Esophagus squamous epithelium (tissue), 5 donors: ENCODE measurements at regions of chr20 and their contacts with region 1.

Region 1: GRCh38 chr20:57526087-57526884 is 1.3 kb upstream of the CTCFL start:
- DNase-seq: no peak
- H3K4me3 ChIP-seq: no peak overlapping the region
- H3K27ac ChIP-seq: no peak overlapping the region
- H3K4me1 ChIP-seq: peaks cover 0 to 20% (median 0%) of the 10 kb centered on the region in 3 donors
- H3K27me3 ChIP-seq: no peaks in the 10 kb centered on the region
- CTCF ChIP-seq: no peak
- POLR2A ChIP-seq: no peak

Region 2: GRCh38 chr20:57195469-57196100 is 330.7 kb before region 1 on chr20:
- intact Hi-C with region 1: no loop called
- DNase-seq: no peak
- H3K4me3 ChIP-seq: no peak overlapping the region
- H3K27ac ChIP-seq: no peak overlapping the region
- H3K4me1 ChIP-seq: peaks cover 0 to 22% (median 3%) of the 10 kb centered on the region in 3 donors
- H3K27me3 ChIP-seq: peaks cover 0 to 43% (median 0%) of the 10 kb centered on the region in 4 donors
- CTCF ChIP-seq: no peak
- POLR2A ChIP-seq: no peak

Region 3: DNA sequence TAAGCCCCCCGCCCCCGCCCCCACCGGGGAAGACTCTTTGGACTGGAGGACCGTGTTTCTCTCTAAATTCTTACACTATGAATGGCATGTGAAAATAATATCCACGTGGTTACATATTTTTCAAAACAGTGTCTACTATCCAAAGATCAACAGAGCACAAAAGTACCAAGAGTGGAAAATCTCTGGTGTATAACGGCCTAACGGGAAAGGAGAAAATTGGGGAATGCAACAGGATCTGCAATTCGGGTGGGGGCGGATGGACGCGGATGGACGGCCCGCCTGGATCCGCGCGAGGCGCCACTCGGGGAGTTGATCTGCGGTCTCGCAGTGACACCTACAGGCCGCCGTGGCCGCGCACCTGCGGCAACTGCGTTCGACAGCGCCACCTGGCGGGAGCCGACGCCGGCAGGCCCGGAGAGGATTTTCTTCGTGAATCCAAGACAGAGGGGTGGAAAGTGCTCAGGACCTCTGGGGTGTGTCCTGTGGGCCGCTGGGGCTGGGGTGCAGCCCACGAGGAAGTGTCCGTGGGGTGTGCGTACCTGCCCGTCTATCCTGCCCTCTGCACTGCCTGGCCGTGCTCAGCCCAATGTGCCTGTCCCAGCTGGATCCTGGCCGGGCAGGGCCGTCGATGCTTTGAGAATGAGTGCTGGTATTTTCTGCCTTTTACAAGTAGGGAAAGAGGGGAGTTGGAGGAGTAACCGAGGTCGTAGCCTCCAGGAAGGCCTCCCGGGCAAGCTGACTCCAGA is 683.5 kb after region 1 on chr20:
- intact Hi-C with region 1: loop called (anchors 10 kb)
- DNase-seq: peak; percentile 25
- H3K4me3 ChIP-seq: no peak overlapping the region
- H3K27ac ChIP-seq: no peak overlapping the region
- H3K4me1 ChIP-seq: peaks cover 0 to 8% (median 0%) of the 10 kb centered on the region in 3 donors
- H3K27me3 ChIP-seq: peaks cover 0 to 46% (median 0%) of the 10 kb centered on the region in 4 donors
- CTCF ChIP-seq: peak; percentile 99 to 100 (median 100)
- POLR2A ChIP-seq: no peak